ENCODE measurements at regions of chr15 and their contacts with region 1.

Region 1: DNA sequence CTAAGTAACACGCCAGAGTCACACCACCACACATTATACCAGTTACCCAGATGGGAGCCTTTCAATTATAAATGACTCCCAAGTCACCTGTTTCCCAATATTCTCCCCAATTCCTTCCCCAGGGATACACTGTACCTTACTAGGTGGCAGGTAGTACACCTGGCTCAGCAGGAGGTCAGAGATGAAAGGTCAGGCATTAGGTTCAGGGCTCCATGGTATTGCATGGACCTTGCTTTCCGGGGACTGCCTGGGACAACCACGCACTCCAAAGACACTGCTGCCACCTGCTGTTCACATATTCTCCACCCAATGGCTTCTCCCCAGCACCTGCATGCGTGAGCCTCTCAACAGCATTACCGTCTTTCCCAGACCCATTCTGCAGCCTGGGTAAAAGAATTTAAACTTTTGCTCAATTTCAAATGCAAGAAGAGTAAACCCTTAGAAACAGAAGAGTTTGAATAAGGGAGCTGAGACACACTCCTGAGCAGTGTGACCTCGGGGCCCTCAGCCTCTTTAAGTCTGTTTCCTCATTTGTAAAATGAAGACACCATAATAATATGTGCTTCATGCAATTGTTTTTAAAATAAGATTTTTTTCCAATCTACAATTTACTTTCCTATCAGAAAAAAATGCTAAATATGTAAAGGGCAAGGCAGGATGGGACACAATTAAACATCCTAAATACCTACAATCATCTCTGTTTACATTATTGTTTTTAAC is 28.0 kb upstream of the LACTB start:
- DNase-seq: peak; percentile 86

Region 2: DNA sequence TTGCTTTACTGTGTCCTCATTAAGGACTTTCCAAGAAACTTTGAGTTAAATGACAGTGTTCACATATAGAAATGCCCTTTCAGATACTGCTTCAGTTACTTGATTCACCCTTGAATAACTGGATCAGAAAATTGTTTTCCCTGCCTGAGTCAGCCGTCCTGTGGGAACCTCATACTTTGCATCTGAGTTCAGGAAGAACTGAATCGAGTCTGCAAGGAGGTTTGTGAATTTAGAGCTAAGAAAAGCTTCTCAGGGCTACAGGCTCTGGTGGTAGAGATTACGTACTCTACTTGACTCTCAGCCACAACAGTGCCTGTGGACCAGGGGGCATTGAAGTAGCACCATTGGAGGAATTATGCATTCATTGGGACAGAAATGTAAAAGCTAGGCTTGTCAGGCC is 676.2 kb before region 1 on chr15:
- intact Hi-C with region 1: no loop called
- DNase-seq: no peak

Region 3: DNA sequence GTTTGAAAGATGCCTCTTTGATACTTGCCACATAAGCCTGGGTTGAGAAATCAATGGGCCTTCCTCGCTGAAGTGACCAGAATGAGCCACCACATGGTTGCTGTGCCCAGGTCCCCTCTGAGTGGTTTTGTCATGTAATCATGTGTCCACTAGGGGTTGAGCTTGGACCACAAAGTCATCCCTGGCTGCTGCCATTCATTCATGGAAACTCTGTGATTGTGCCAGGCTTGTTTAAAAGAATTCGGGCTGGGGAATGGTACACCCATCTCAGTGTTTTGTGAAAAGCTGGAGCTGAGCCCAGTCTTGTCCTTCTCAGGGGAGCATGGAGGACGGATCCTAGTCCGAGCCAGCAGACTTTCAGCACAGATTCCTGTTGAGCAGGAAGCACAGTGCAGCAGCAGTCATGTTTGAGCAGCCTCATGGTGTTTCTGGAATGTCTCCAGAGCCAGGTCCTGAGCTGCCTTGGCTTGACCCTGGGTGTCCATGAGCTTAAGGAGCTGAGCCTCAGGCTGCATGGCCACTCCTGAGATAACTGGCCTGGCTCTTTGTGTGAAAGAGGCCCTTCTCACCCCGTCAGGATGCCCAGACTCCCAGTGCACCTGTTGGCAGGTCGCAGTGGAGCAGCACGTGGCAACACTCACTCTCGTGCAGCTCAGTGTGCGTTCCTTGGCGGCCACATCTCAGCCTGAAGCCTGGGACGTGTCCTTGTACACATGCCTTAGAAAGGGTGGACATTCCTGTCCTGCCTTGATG is 311.4 kb before region 1 on chr15:
- intact Hi-C with region 1: loop called (anchors 2 kb)
- DNase-seq: peak; percentile 80

Region 4: GRCh38 chr15:62857411-62857853 is 236.2 kb before region 1 on chr15:
- intact Hi-C with region 1: no loop called
- DNase-seq: no peak

Region 5: DNA sequence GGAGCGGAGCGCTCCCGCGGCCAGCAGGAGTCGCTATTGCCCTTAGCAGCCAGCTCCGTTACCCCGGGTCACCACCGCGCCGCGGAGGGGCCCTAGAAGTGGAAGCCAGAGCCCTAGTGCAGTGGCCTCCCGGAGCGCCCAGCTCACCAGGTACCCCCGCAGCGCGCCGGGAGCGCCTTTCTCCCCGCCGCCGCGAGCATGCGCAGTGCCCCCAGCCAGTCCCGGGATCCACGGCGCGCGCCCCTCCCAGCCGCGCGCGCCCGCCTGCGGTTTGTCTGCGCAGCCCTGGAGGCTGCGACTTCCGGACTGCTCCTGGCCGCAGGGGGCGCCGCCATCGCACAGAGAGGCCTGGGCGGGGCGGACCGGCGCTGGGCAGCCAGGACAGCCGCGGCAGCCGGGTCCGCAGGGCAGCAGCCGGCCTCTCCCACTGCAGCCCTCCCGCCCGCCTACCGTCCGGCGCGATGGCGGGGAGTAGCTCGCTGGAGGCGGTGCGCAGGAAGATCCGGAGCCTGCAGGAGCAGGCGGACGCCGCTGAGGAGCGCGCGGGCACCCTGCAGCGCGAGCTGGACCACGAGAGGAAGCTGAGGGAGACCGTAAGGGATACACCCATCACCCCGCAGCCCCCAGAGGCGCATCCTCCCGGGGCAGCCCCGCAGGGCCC is 45.4 kb before region 1 on chr15:
- intact Hi-C with region 1: loop called (anchors 2 kb)
- DNase-seq: peak; percentile 96